ENCODE measurements at regions of chr18 and their contacts with region 1.

Region 1: GRCh38 chr18:52897611-52898484 is 557.9 kb downstream of the DCC start:
- DNase-seq: no peak
- H3K4me3 ChIP-seq: no peak overlapping the region
- CTCF ChIP-seq: no peak

Region 2: GRCh38 chr18:52950155-52950554 is 52.3 kb after region 1 on chr18:
- in situ Hi-C with region 1: loop called (anchors 10 kb)
- DNase-seq: no peak
- H3K4me3 ChIP-seq: no peak overlapping the region
- CTCF ChIP-seq: no peak